ENCODE measurements at regions of chr10 and their contacts with region 1.

Region 1: GRCh38 chr10:119469846-119470245 is 72.7 kb downstream of the RGS10 start:
- DNase-seq: no peak
- H3K4me3 Mint-ChIP-seq: no peak overlapping the region
- H3K27ac Mint-ChIP-seq: no peak overlapping the region
- H3K4me1 Mint-ChIP-seq: no peaks in the 10 kb centered on the region
- H3K27me3 Mint-ChIP-seq: peaks cover 7% of the 10 kb centered on the region
- CTCF ChIP-seq: no peak

Region 2: GRCh38 chr10:119190353-119190752 is 279.5 kb before region 1 on chr10:
- CTCF ChIA-PET with region 1: interaction called, 12 read pairs
- intact Hi-C with region 1: no loop called
- DNase-seq: no peak
- H3K4me3 Mint-ChIP-seq: no peak overlapping the region
- H3K27ac Mint-ChIP-seq: no peak overlapping the region
- H3K4me1 Mint-ChIP-seq: no peaks in the 10 kb centered on the region
- H3K27me3 Mint-ChIP-seq: no peaks in the 10 kb centered on the region
- CTCF ChIP-seq: no peak

Measured in Calu3 (cell line).